Ovary (tissue), 10 donors: ENCODE measurements at regions of chr12 and their contacts with region 1.

Region 1: DNA sequence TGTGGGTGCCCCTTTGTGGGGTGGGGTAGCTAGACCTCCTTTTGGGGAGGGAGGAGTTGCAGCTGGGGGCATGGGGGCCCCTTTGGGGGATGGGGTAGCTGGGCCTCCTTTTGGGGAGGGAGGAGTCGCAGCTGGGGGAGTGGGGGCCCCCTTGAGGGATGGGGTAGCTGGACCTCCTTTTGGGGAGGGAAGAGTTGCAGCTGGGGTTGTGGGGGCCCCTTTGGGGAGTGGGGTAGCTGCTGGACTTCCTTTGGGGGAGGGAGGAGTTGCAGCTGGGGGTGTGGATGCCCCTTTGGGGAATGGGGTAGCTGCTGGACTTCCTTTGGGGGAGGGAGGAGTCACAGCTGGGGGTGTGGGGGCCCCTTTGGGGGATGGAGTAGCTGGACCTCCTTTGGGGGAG is 7.0 kb downstream of the NACA start:
- DNase-seq: peak in 1 of 5 donors; percentile 18
- H3K4me3 ChIP-seq: no peak overlapping the region
- H3K27ac ChIP-seq: no peak overlapping the region
- H3K4me1 ChIP-seq: peaks cover 20% of the 10 kb centered on the region
- H3K27me3 ChIP-seq: no peaks in the 10 kb centered on the region
- CTCF ChIP-seq: no peak
- EP300 ChIP-seq: no peak
- POLR2A ChIP-seq: no peak

Region 2: DNA sequence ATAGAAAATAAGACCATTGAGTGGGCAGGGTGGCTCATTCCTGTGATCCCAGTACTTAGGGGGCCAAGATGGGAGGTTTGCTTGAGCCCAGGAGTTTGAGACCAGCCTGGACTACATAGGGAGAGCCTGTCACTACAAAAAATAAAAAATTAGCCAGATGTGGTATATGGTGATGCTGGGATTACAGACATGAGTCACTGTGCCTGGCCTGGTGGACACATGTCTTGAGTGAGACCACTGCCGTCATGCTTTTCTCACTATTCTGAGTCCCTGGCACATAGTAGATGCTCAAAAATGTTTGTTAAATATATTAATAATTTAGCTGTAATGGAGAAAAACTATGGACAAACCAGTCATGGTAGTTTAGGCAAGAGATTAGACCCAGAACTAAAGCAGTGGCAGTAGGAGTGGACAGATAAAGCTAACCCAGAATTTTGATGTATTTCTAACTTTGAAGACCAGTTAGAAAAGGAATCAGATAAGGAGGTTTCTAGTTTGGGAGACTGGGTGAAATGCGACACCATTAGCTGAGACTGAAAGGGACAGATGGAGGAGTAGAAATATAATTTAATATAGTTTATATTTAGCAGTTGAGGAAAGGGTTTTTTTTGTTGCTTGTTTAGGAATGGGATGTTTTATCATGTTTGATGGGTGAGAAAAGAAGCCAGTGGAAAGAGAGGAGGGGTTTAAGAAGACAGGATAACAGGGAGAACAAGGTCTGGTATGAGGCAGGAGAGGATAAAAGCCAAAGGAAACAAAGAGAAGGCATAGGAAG is 22.6 kb before region 1 on chr12:
- intact Hi-C with region 1: loop called in 1 of 4 experiments (anchors 2 kb)
- DNase-seq: peak in 1 of 5 donors; percentile 1
- H3K4me3 ChIP-seq: no peak overlapping the region
- H3K27ac ChIP-seq: no peak overlapping the region
- H3K4me1 ChIP-seq: no peaks in the 10 kb centered on the region
- H3K27me3 ChIP-seq: no peaks in the 10 kb centered on the region
- CTCF ChIP-seq: no peak
- EP300 ChIP-seq: no peak
- POLR2A ChIP-seq: no peak